Sigmoid colon (tissue), 7 donors: ENCODE measurements at regions of chr22 and their contacts with region 1.

Region 1: DNA sequence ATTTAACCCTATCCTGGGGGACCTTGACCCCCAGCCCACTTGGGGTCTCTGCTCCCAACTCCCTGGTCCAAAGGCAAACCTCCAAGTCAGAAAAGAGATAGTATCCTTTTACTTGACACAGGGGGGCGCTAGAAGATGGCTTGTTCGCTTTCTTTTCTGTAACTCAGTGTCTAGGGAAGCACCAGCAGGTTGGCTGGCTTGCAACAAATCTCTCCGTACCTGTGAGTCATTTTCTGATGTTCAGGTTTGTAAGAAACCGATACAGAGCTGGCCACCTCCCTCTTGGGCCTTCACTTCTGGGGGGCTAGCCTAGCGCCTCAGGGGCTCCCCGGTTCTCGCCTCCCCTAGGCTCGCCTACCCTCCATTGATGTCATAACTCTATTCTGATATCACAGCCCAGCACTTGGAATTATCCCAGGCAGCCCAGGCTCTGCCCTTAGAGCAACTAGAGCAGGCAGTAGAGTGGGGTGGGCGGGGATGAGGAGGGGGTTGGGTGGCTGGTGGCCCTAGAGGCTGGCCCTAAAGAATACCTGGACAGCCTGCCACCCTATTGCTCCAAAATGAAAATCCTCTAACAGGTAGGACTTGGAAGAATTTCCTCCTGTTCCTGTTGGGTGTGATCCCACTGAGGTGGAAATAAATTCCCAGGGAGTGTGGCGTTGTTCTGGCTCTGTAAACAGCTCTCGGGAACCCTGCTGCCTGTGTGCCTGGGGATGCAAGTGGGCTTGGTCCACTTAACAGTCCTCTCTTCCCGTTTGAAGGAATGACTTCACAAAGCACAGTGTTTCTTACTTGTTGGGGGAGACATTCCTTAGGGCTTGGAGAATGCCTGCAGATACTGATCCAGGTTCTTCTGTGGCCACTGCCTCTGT is 69.4 kb downstream of the OSBP2 start:
- DNase-seq: no peak
- H3K4me3 ChIP-seq: no peak overlapping the region
- H3K27ac ChIP-seq: no peak overlapping the region
- H3K4me1 ChIP-seq: no peaks in the 10 kb centered on the region
- H3K27me3 ChIP-seq: no peaks in the 10 kb centered on the region
- CTCF ChIP-seq: peak in 2 of 4 experiments; percentile 47 to 50
- EP300 ChIP-seq: no peak
- POLR2A ChIP-seq: no peak

Region 2: DNA sequence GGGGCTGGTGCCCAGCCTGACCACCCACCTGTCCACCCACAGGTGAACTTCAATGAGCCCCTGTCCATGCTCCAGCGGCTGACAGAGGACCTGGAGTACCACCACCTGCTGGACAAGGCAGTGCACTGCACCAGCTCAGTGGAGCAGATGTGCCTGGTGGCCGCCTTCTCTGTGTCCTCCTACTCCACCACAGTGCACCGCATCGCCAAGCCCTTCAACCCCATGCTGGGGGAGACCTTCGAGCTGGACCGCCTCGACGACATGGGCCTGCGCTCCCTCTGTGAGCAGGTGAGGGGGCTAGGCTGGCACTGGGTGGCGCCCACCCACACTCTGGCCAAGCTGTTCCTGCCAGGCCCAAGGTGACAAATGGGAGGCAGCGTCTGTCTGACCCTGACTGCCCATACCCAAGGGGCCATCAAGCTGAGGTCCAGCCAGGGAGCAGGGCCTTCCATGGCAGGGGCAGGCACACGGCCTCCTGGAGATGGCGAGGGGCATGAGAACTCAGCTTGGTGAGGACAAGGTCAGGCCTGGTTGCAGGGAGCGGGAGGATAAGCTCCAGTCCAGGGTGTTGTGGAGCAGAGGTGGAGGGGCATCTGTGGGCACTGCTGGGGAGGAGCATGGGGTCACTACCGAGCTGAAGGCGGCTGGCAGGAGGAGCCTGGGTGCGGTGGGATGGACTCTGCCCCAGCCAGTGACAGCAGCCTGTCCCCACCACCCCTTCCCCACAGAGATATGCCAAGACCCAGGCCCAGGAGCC is 126.8 kb after region 1 on chr22:
- intact Hi-C with region 1: no loop called
- DNase-seq: peak; percentile 62
- H3K4me3 ChIP-seq: no peak overlapping the region
- H3K27ac ChIP-seq: no peak overlapping the region
- H3K4me1 ChIP-seq: no peaks in the 10 kb centered on the region
- H3K27me3 ChIP-seq: no peaks in the 10 kb centered on the region
- CTCF ChIP-seq: peak; percentile 4 to 62 (median 40)
- EP300 ChIP-seq: no peak
- POLR2A ChIP-seq: no peak

Region 3: GRCh38 chr22:30920407-30920806 is 156.4 kb after region 1 on chr22:
- intact Hi-C with region 1: loop called (anchors 5 kb)
- DNase-seq: peak; percentile 87
- H3K4me3 ChIP-seq: no peak overlapping the region
- H3K27ac ChIP-seq: no peak overlapping the region
- H3K4me1 ChIP-seq: peaks cover 0 to 15% (median 11%) of the 10 kb centered on the region in 4 donors
- H3K27me3 ChIP-seq: no peaks in the 10 kb centered on the region
- CTCF ChIP-seq: peak; percentile 70 to 90 (median 83)
- EP300 ChIP-seq: no peak
- POLR2A ChIP-seq: no peak

Region 4: DNA sequence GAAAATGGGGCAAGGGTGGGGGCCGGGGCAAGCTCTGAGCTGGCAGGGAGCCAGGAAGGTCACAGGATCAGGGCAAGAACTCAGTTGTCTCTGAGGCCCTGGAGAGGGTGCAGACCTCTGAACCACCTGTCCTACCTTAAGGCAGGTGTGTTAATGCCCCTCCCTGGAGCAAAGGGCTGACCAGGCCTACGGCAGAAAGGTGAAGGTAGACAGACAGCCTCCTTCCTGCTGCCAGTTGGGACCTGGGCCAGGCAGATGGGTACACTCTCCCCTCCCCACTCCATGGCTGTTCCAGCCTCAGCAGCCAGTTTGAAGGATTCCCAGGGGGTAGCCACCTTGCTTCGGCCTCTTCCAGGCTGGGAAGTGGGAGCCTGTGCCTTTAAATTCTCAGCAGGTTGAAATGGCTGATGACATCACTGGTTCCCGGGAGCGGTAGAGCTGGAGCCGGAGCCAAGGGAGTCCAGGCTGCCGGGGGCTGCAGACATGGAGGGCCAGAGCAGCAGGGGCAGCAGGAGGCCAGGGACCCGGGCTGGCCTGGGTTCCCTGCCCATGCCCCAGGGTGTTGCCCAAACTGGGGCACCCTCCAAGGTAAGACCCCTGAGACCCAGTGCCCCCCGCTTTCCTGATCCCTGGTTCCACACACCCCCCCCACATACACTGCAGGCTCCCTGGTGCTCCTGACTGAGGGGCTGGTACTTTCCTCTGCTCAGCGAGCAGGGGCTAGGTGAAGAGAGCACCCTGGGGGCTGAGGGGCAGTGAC is 358.7 kb after region 1 on chr22 and contains the start of gene INPP5J:
- intact Hi-C with region 1: loop called (anchors 10 kb)
- DNase-seq: peak; percentile 87
- H3K4me3 ChIP-seq: peak within 1 kb of the TSS; percentile 35 to 52 (median 43)
- H3K27ac ChIP-seq: peak within 1 kb of the TSS; percentile 49 to 72 (median 63)
- H3K4me1 ChIP-seq: peaks cover 0 to 19% (median 17%) of the 10 kb centered on the region in 4 donors
- H3K27me3 ChIP-seq: no peaks in the 10 kb centered on the region
- CTCF ChIP-seq: no peak
- EP300 ChIP-seq: no peak
- POLR2A ChIP-seq: peak in 1 of 2 donors; percentile 17
- total RNA-seq, gene INPP5J: 1.1 to 2.2 (median 1.8) TPM